GM12878 (cell line): ENCODE measurements at regions of chr3 and their contacts with region 1.

Region 1: GRCh38 chr3:36868614-36869436 is 76.0 kb downstream of the TRANK1 start:
- DNase-seq: peak; percentile 16
- ATAC-seq: peak; percentile 98
- H3K4me3 ChIP-seq: no peak overlapping the region
- H3K27ac ChIP-seq: no peak overlapping the region
- H3K4me1 ChIP-seq: no peaks in the 10 kb centered on the region
- H3K27me3 ChIP-seq: no peaks in the 10 kb centered on the region
- CTCF ChIP-seq: peak; percentile 70 to 78 (median 75)
- EP300 ChIP-seq: no peak
- POLR2A ChIP-seq: no peak
- RAD21 ChIP-seq: peak; percentile 78

Region 2: DNA sequence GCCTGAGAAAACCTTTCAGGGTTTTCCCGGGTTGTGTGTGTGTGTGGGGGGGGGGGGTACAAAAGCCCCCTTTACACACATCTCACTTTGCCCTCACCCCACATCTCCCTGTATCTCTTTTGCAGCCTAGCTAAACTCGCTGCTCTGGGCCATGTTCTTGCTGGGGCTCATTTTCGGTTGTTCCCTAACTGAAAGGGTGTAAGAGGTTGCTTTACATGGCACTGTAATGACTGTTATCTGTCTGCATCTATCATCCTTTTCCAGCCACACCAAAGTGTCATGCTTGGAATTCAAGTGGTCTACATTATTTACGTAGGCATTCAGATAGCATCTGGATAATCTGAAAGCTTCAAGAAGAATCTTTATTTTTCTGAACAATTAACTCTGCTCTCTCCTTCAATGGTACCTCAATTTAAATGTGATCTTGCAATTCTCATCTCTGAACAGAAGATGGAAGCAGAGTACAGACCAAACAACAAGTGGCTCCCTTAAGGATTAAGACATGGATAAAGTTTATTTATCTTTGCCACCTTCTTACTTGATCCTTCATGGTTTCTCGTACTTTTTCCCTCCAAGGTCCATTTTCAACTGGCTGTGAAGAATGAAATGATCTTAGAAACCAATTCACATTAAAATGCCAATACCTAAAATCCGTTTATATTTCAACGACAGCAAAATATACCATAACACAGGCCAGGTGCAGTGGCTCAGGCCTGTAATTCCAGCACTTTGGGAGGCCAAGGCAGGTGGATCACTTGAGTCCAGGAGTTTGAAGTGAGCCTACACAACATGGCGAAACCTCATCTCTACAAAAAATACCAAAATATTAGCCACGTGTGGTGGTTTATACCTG is 139.4 kb before region 1 on chr3:
- CTCF ChIA-PET with region 1: interaction called, 23 read pairs
- POLR2A ChIA-PET with region 1: no interaction called
- RAD21 ChIA-PET with region 1: interaction called, 8 read pairs
- SMC1A ChIA-PET with region 1: interaction called, 13 read pairs
- in situ Hi-C with region 1: loop called (anchors 10 kb)
- intact Hi-C with region 1: loop called (anchors 1 kb)
- DNase-seq: no peak
- ATAC-seq: peak; percentile 77
- H3K4me3 ChIP-seq: no peak overlapping the region
- H3K27ac ChIP-seq: no peak overlapping the region
- H3K4me1 ChIP-seq: no peaks in the 10 kb centered on the region
- H3K27me3 ChIP-seq: no peaks in the 10 kb centered on the region
- CTCF ChIP-seq: peak; percentile 56 to 79 (median 65)
- EP300 ChIP-seq: no peak
- POLR2A ChIP-seq: no peak
- RAD21 ChIP-seq: peak; percentile 90

Region 3: GRCh38 chr3:36741285-36741684 is 127.5 kb before region 1 on chr3:
- CTCF ChIA-PET with region 1: interaction called, 13 read pairs
- POLR2A ChIA-PET with region 1: no interaction called
- RAD21 ChIA-PET with region 1: no interaction called
- SMC1A ChIA-PET with region 1: no interaction called
- in situ Hi-C with region 1: loop called (anchors 10 kb)
- intact Hi-C with region 1: no loop called
- DNase-seq: no peak
- ATAC-seq: no peak
- H3K4me3 ChIP-seq: no peak overlapping the region
- H3K27ac ChIP-seq: no peak overlapping the region
- H3K4me1 ChIP-seq: no peaks in the 10 kb centered on the region
- H3K27me3 ChIP-seq: peaks cover 0 to 1% of the 10 kb centered on the region in 2 experiments; a peak in 1 of 4 replicates
- CTCF ChIP-seq: no peak
- EP300 ChIP-seq: no peak
- POLR2A ChIP-seq: no peak
- RAD21 ChIP-seq: no peak

Region 4: GRCh38 chr3:36852071-36852470 is 16.8 kb before region 1 on chr3:
- CTCF ChIA-PET with region 1: interaction called, 41 read pairs
- POLR2A ChIA-PET with region 1: interaction called, 5 read pairs
- RAD21 ChIA-PET with region 1: no interaction called
- SMC1A ChIA-PET with region 1: interaction called, 29 read pairs
- in situ Hi-C with region 1: no loop called
- intact Hi-C with region 1: no loop called
- DNase-seq: no peak
- ATAC-seq: no peak
- H3K4me3 ChIP-seq: no peak overlapping the region
- H3K27ac ChIP-seq: no peak overlapping the region
- H3K4me1 ChIP-seq: no peaks in the 10 kb centered on the region
- H3K27me3 ChIP-seq: no peaks in the 10 kb centered on the region
- CTCF ChIP-seq: no peak
- EP300 ChIP-seq: no peak
- POLR2A ChIP-seq: no peak
- RAD21 ChIP-seq: no peak

Region 5: GRCh38 chr3:36918050-36918449 is 49.2 kb after region 1 on chr3:
- CTCF ChIA-PET with region 1: interaction called, 11 read pairs
- POLR2A ChIA-PET with region 1: no interaction called
- RAD21 ChIA-PET with region 1: no interaction called
- SMC1A ChIA-PET with region 1: interaction called, 3 read pairs
- in situ Hi-C with region 1: no loop called
- intact Hi-C with region 1: no loop called
- DNase-seq: peak; percentile 48
- ATAC-seq: peak; percentile 85
- H3K4me3 ChIP-seq: no peak overlapping the region
- H3K27ac ChIP-seq: no peak overlapping the region
- H3K4me1 ChIP-seq: peaks cover 14% of the 10 kb centered on the region
- H3K27me3 ChIP-seq: no peaks in the 10 kb centered on the region
- CTCF ChIP-seq: no peak
- EP300 ChIP-seq: 0 out of 4 replicates have a peak, but pooled peaks have one; percentile 24 to 50
- POLR2A ChIP-seq: no peak
- RAD21 ChIP-seq: no peak